ENCODE measurements at regions of chr6 and their contacts with region 1.

Region 1: GRCh38 chr6:155260686-155261085 is 3.1 kb upstream of the CLDN20 start:
- DNase-seq: no peak
- H3K4me3 ChIP-seq: no peak overlapping the region
- H3K27ac ChIP-seq: peak overlapping the region; percentile 12 to 47; a peak in 2 of 4 replicates
- H3K4me1 ChIP-seq: peaks cover 4 to 64% of the 10 kb centered on the region in 2 experiments; a peak in 3 of 4 replicates
- H3K27me3 ChIP-seq: no peaks in the 10 kb centered on the region
- CTCF ChIP-seq: no peak
- EP300 ChIP-seq: no peak
- RAD21 ChIP-seq: no peak

Region 2: DNA sequence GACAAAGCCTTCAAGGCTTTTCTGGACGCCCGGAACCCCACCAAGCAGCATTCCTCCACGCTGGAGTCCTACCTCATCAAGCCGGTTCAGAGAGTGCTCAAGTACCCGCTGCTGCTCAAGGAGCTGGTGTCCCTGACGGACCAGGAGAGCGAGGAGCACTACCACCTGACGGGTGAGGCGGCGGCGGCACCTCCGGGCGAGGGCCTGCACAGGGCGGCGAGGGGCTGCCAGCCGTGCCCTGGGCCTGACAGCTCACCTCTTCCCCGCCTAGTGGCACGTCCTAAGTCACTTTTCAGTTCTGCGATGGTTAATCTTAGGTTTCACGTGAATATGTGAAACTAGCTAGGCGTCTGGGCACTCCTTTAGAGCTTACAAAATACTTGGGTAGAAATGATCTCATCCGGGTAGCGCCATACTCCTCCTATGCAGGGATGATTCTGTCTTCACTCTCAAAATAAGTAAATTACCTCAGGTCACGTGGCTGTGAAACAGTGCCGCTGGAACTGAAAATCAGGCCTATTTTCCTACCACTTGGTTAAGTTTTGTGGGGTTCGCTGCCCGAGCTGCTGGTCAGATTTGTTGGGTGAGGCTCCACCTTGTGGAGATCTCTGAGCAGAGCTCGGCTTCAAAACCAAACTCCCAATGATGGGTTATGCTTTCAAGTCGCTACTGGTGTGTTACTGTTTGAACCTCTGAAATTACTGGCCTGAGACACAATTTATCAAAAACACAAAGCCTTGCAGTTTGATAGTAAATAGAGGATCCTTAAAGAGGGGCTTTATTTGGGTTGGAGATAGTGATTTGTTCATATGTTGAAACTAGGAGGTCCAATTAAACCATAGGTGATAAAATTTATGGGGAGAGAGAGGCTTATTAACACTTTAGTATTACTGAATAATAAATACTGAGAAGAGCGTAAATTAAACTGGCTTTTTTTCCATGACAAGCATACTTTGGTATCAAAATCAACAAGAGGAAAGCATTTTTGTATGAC is 12.4 kb before region 1 on chr6:
- CTCF ChIA-PET with region 1: interaction called, 36 read pairs
- POLR2A ChIA-PET with region 1: no interaction called
- DNase-seq: peak; percentile 65
- H3K4me3 ChIP-seq: no peak overlapping the region
- H3K27ac ChIP-seq: peak overlapping the region; percentile 50 to 57
- H3K4me1 ChIP-seq: peaks cover 0 to 3% of the 10 kb centered on the region in 2 experiments; a peak in 3 of 4 replicates
- H3K27me3 ChIP-seq: no peaks in the 10 kb centered on the region
- CTCF ChIP-seq: peak; percentile 76
- EP300 ChIP-seq: no peak
- RAD21 ChIP-seq: peak; percentile 75

Region 3: DNA sequence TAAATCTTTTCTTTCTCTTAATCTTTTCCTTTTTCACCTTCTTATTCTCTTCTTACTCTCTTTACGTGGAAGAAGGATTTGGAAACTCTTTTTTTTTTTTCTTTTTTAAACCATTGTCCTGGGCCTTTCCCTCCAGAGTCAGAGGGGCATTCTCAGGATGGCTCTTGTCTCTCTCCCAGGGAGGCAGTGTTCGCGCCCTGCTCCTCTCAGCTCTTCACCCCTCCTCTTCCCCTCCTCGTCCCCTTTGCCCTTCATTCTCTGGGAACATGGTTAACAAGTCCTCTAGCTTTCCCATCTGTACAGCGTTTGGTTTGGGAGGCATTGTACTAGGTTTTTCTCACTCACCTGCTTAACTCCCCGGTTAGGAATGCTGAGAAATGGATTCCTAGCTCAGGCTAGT is 105.6 kb after region 1 on chr6:
- CTCF ChIA-PET with region 1: no interaction called
- POLR2A ChIA-PET with region 1: no interaction called
- DNase-seq: no peak
- H3K4me3 ChIP-seq: no peak overlapping the region
- H3K27ac ChIP-seq: no peak overlapping the region
- H3K4me1 ChIP-seq: no peaks in the 10 kb centered on the region
- H3K27me3 ChIP-seq: no peaks in the 10 kb centered on the region
- CTCF ChIP-seq: no peak
- EP300 ChIP-seq: no peak
- RAD21 ChIP-seq: no peak